ENCODE measurements at regions of chr16 and their contacts with region 1.

Region 1: GRCh38 chr16:27367461-27368357 is 34.3 kb upstream of the IL21R start:
- DNase-seq: peak; percentile 98 to 99 (median 99)
- H3K4me3 ChIP-seq: peak overlapping the region in 5 of 7 experiments; percentile 13 to 54 (median 45)
- H3K27ac ChIP-seq: peak overlapping the region; percentile 90 to 93
- H3K4me1 ChIP-seq: peaks cover 4 to 35% (median 30%) of the 10 kb centered on the region in 4 experiments
- H3K27me3 ChIP-seq: no peaks in the 10 kb centered on the region

Region 2: GRCh38 chr16:27154705-27155521 is 212.8 kb before region 1 on chr16:
- CTCF ChIA-PET with region 1: interaction called, 12 read pairs
- POLR2A ChIA-PET with region 1: no interaction called
- DNase-seq: peak in 2 of 3 donors; percentile 53 to 57
- H3K4me3 ChIP-seq: no peak overlapping the region
- H3K27ac ChIP-seq: no peak overlapping the region
- H3K4me1 ChIP-seq: peaks cover 0 to 17% (median 11%) of the 10 kb centered on the region in 4 experiments
- H3K27me3 ChIP-seq: no peaks in the 10 kb centered on the region

Region 3: GRCh38 chr16:27222249-27223225 is 145.2 kb before region 1 on chr16:
- CTCF ChIA-PET with region 1: interaction called, 17 read pairs
- POLR2A ChIA-PET with region 1: no interaction called
- DNase-seq: no peak
- H3K4me3 ChIP-seq: no peak overlapping the region
- H3K27ac ChIP-seq: no peak overlapping the region
- H3K4me1 ChIP-seq: peaks cover 0 to 16% (median 11%) of the 10 kb centered on the region in 4 experiments
- H3K27me3 ChIP-seq: no peaks in the 10 kb centered on the region

Region 4: GRCh38 chr16:27355610-27356009 is 12.1 kb before region 1 on chr16:
- CTCF ChIA-PET with region 1: interaction called, 37 read pairs
- POLR2A ChIA-PET with region 1: interaction called, 4 read pairs
- DNase-seq: peak; percentile 45 to 71 (median 69)
- H3K4me3 ChIP-seq: no peak overlapping the region
- H3K27ac ChIP-seq: no peak overlapping the region
- H3K4me1 ChIP-seq: no peaks in the 10 kb centered on the region
- H3K27me3 ChIP-seq: no peaks in the 10 kb centered on the region

Region 5: GRCh38 chr16:27426423-27427408 is 59.0 kb after region 1 on chr16:
- CTCF ChIA-PET with region 1: interaction called, 17 read pairs
- POLR2A ChIA-PET with region 1: interaction called, 5 read pairs
- DNase-seq: peak; percentile 65 to 95 (median 92)
- H3K4me3 ChIP-seq: peak overlapping the region in 1 of 7 experiments; percentile 25
- H3K27ac ChIP-seq: no peak overlapping the region
- H3K4me1 ChIP-seq: peaks cover 4 to 48% (median 26%) of the 10 kb centered on the region in 4 experiments
- H3K27me3 ChIP-seq: no peaks in the 10 kb centered on the region